Right cardiac atrium (tissue), 5 donors: ENCODE measurements at regions of chr11 and their contacts with region 1.

Region 1: DNA sequence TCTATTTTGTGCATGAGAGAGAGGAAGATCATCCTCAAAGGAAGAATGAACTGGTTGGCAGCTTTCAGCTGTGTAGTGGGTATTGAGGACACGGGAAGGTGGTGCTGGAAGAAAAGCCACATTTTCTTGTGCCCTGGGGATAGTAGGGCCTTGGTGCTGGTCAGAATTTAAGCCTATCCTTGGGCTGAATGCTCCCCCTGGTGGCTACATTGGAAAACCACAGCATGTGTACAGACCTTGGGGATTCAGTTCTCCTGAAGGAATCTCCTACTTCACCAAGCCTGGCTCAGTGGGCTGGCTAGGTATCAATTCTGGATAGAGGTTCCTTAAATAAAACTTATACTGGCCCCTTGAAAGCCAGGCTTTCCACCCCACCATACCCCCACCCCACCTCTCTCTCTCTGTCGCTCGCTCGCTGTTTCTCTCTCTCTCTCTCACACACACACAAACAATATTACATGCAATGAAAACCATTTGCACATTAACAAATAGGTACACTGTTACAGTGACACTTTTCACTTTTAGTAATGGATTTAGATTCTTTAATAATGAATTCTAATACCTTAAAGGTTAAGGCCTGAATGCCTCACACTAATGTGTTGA is 2.8 kb upstream of the OR51M1 start:
- DNase-seq: peak in 2 of 3 donors; percentile 17 to 25
- ATAC-seq: peak; percentile 66 to 70
- H3K4me3 ChIP-seq: no peak overlapping the region
- H3K27ac ChIP-seq: no peak overlapping the region
- H3K4me1 ChIP-seq: no peaks in the 10 kb centered on the region
- H3K27me3 ChIP-seq: no peaks in the 10 kb centered on the region

Region 2: DNA sequence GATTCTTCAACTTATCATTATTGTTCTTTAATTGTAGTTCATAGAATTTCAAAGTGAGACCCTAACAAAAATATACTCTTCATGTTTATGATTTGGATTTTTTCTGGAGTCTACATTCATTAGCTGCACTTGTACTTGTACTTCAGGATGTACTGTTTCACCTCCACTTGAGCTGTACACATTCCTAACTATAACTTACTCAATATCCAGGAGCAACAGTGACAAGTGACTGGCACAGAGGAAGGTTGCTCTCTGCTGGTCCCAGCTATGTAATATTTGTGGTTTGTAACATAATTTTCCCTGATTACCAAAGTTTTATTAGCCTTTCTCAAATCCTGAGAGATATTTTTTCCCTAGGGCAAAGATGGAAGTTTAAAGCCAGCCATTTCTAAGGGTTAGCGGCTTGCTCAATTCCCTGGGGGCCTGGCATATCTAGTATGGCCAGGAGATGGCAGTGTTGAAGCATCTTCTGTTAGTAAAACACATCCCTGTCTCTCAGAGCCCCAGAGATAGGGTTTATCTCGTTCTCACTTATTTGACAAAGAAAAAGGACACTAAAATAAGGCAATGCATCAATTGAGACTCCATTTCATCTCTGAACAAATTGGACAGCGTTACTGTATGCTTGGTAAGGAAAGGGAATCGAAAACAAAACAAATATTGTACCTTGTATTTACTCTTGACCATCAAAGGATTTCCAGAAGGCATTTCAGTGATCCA is 256.9 kb before region 1 on chr11:
- intact Hi-C with region 1: loop called in 3 of 4 experiments (anchors 5 to 10 kb)
- DNase-seq: peak; percentile 44 to 60 (median 59)
- ATAC-seq: peak; percentile 63 to 72
- H3K4me3 ChIP-seq: no peak overlapping the region
- H3K27ac ChIP-seq: no peak overlapping the region
- H3K4me1 ChIP-seq: no peaks in the 10 kb centered on the region
- H3K27me3 ChIP-seq: peaks cover 2% of the 10 kb centered on the region

Region 3: DNA sequence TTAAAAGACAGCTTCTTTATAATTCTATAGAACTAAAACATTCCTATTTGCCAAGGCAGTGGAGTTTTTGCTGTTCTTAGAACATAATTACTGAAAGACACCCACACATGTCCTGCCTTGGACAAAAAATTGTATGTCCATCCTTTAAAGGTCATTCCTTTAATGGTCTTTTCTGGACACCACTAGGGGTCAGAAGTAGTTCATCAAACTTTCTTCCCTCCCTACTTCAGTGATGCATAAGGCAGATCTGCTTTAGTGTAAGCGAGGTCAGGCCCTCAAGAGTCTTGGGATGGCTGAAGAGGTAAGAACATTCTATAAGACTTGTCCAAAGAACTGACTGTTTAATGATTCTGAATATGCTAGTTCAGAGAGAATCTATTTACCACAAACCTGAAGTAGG is 176.1 kb before region 1 on chr11:
- intact Hi-C with region 1: loop called in 1 of 4 experiments (anchors 2 kb)
- DNase-seq: no peak
- ATAC-seq: no peak
- H3K4me3 ChIP-seq: no peak overlapping the region
- H3K27ac ChIP-seq: no peak overlapping the region
- H3K4me1 ChIP-seq: no peaks in the 10 kb centered on the region
- H3K27me3 ChIP-seq: no peaks in the 10 kb centered on the region